CD8-positive, alpha-beta T cell (primary cell): ENCODE measurements at regions of chr6 and their contacts with region 1.

Region 1: GRCh38 chr6:126235363-126235762 is 104.6 kb upstream of the CENPW start:
- DNase-seq: no peak
- ATAC-seq: no peak
- H3K4me3 ChIP-seq: no peak overlapping the region
- H3K4me3 Mint-ChIP-seq: no peak overlapping the region
- H3K27ac ChIP-seq: no peak overlapping the region
- H3K27ac Mint-ChIP-seq: no peak overlapping the region
- H3K4me1 ChIP-seq: no peaks in the 10 kb centered on the region
- H3K4me1 Mint-ChIP-seq: no peaks in the 10 kb centered on the region
- H3K27me3 ChIP-seq: no peaks in the 10 kb centered on the region
- H3K27me3 Mint-ChIP-seq: no peaks in the 10 kb centered on the region
- CTCF ChIP-seq: no peak

Region 2: DNA sequence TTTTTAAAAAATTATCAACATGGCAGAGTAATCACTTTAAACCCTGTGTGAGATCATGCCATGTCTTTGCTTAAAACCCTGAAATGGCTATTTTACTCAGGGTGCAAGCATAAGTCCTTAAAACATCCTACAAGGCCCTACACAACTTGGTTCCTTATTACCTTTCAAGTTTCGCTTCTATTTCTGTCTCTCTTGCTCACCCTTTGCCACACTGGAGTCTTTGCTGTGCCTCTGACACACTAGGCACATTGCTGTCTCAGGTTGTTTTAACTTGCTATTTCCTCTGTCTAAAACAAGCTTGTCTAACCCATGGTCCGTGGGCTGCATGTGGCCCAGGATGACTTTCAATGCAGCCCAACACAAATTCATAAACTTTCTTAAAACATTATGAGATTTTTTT is 1168.3 kb after region 1 on chr6:
- CTCF ChIA-PET with region 1: no interaction called
- POLR2A ChIA-PET with region 1: no interaction called
- intact Hi-C with region 1: loop called in 1 of 2 experiments (anchors 5 kb)
- DNase-seq: no peak
- ATAC-seq: no peak
- H3K4me3 ChIP-seq: no peak overlapping the region
- H3K4me3 Mint-ChIP-seq: no peak overlapping the region
- H3K27ac ChIP-seq: no peak overlapping the region
- H3K27ac Mint-ChIP-seq: no peak overlapping the region
- H3K4me1 ChIP-seq: no peaks in the 10 kb centered on the region
- H3K4me1 Mint-ChIP-seq: no peaks in the 10 kb centered on the region
- H3K27me3 ChIP-seq: no peaks in the 10 kb centered on the region
- H3K27me3 Mint-ChIP-seq: peaks cover 2% of the 10 kb centered on the region
- CTCF ChIP-seq: no peak